Sciatic nerve (tissue), 2 donors: ENCODE measurements at regions of chr6 and their contacts with region 1.

Region 1: DNA sequence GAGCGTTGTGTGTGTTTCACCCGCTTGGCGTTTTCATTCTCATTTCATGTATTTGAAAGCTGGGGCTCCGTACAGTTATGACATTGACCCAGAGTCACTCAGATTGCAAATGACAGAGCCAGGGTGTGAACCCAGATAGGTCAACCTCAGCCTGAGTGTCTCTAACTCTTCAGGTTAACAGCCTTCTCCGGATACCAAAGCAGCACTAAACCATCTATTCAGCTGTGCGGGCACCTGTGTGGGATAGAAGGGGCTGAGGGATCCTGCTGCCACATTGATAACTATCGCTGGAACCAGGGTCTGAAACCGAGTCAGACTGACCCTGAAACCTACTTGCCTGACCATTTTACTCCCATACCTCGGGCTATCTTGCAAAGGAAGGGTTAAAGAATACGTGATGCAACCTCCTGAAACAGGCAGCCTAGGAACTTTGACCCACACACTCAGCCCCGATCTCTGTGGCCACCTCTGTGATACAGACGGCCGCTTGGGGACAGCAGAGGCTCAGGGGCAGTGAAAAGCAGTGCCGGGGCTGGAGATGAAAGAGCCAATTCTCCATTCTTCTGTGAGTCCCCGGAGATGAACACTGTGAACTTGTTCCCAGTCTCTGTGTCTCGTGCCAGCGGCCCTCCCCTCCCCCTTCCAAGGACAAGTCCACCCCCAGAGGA is 233.5 kb upstream of the QKI start:
- DNase-seq: peak; percentile 88
- ATAC-seq: peak; percentile 97

Region 2: DNA sequence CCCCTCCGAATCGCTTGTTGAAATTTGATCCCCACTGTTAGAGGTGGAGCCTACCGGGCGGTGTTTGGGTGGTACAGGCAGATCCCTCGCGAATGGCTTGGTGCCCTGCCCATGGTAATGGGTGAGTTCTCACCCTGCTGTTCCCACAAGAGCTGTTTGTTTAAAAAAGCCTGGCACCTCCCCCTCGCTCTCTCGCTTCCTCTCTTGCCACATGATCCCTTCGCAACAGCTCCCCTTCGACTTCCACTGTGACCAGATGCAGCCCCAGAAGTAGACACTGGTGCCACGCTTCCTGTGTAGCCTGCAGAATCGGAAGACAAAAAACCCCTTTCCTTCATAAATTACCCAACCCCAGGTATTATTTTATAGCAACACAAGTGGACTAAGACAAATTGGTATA is 58.6 kb before region 1 on chr6:
- intact Hi-C with region 1: no loop called
- DNase-seq: no peak
- ATAC-seq: no peak

Region 3: GRCh38 chr6:163416557-163417253 is 235.7 kb after region 1 on chr6:
- intact Hi-C with region 1: loop called (anchors 5 kb)
- DNase-seq: peak; percentile 77
- ATAC-seq: peak; percentile 51

Region 4: GRCh38 chr6:164106345-164106769 is 925.3 kb after region 1 on chr6:
- intact Hi-C with region 1: loop called (anchors 10 kb)
- DNase-seq: peak; percentile 65
- ATAC-seq: peak; percentile 36